CD14-positive monocyte (primary cell): ENCODE measurements at regions of chr1 and their contacts with region 1.

Region 1: GRCh38 chr1:200488375-200489165 is 78.7 kb upstream of the ZNF281 start:
- DNase-seq: peak; percentile 27 to 52 (median 52)
- H3K4me3 ChIP-seq: no peak overlapping the region
- H3K4me3 Mint-ChIP-seq: no peak overlapping the region
- H3K27ac ChIP-seq: no peak overlapping the region
- H3K27ac Mint-ChIP-seq: no peak overlapping the region
- H3K4me1 ChIP-seq: no peaks in the 10 kb centered on the region
- H3K4me1 Mint-ChIP-seq: peaks cover 7% of the 10 kb centered on the region
- H3K27me3 ChIP-seq: no peaks in the 10 kb centered on the region
- H3K27me3 Mint-ChIP-seq: peaks cover 0 to 7% (median 4%) of the 10 kb centered on the region in 3 donors
- CTCF ChIP-seq: peak; percentile 77

Region 2: DNA sequence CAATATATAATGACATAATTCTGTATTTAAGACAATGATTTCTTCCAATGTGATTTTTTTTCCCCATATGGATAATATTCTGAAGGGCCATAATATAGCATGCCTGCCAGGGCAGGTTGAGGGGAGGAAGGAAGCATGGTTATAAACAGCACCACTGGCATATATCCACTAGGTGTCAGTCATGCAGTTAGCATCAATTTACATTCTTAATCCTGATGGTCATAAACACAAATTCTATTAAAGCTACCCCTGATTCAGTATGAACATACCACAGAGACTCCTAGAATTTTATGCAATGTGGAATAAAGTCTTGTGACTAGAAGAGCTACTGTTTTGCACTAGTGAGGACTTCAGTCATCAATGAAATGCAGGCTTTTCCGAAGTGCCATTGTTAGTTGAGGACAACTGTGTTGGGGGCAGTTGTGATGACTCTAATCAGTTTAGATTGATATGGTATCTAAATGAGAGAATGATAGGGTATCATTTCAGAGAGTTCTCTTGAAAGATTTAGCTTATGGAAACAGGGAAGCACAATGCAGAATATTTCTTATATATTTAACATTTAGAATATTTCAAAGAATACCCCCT is 803.8 kb before region 1 on chr1:
- intact Hi-C with region 1: loop called (anchors 5 to 10 kb)
- DNase-seq: peak; percentile 42 to 72 (median 56)
- H3K4me3 ChIP-seq: no peak overlapping the region
- H3K4me3 Mint-ChIP-seq: no peak overlapping the region
- H3K27ac ChIP-seq: no peak overlapping the region
- H3K27ac Mint-ChIP-seq: no peak overlapping the region
- H3K4me1 ChIP-seq: peaks cover 0 to 6% of the 10 kb centered on the region in 2 donors
- H3K4me1 Mint-ChIP-seq: peaks cover 14% of the 10 kb centered on the region
- H3K27me3 ChIP-seq: no peaks in the 10 kb centered on the region
- H3K27me3 Mint-ChIP-seq: peaks cover 0 to 1% (median 0%) of the 10 kb centered on the region in 3 donors
- CTCF ChIP-seq: peak; percentile 92

Region 3: GRCh38 chr1:200029035-200029821 is 459.3 kb before region 1 on chr1:
- intact Hi-C with region 1: no loop called
- DNase-seq: no peak
- H3K4me3 ChIP-seq: peak overlapping the region; percentile 36 to 81 (median 45)
- H3K4me3 Mint-ChIP-seq: peak overlapping the region; percentile 80 to 96
- H3K27ac ChIP-seq: no peak overlapping the region
- H3K27ac Mint-ChIP-seq: no peak overlapping the region
- H3K4me1 ChIP-seq: peaks cover 12 to 15% of the 10 kb centered on the region in 2 donors
- H3K4me1 Mint-ChIP-seq: peaks cover 14% of the 10 kb centered on the region
- H3K27me3 ChIP-seq: peaks cover 68 to 89% of the 10 kb centered on the region in 2 donors
- H3K27me3 Mint-ChIP-seq: peaks cover 29 to 64% (median 32%) of the 10 kb centered on the region in 3 donors
- CTCF ChIP-seq: no peak

Region 4: GRCh38 chr1:200139661-200140250 is 348.8 kb before region 1 on chr1:
- intact Hi-C with region 1: loop called (anchors 2 to 10 kb)
- DNase-seq: peak; percentile 21 to 49 (median 48)
- H3K4me3 ChIP-seq: no peak overlapping the region
- H3K4me3 Mint-ChIP-seq: no peak overlapping the region
- H3K27ac ChIP-seq: no peak overlapping the region
- H3K27ac Mint-ChIP-seq: no peak overlapping the region
- H3K4me1 ChIP-seq: no peaks in the 10 kb centered on the region
- H3K4me1 Mint-ChIP-seq: peaks cover 15% of the 10 kb centered on the region
- H3K27me3 ChIP-seq: no peaks in the 10 kb centered on the region
- H3K27me3 Mint-ChIP-seq: peaks cover 0 to under 1% (median 0%) of the 10 kb centered on the region in 3 donors
- CTCF ChIP-seq: peak; percentile 86

Region 5: GRCh38 chr1:200279810-200280411 is 208.7 kb before region 1 on chr1:
- intact Hi-C with region 1: loop called (anchors 10 kb)
- DNase-seq: peak; percentile 12 to 39 (median 28)
- H3K4me3 ChIP-seq: no peak overlapping the region
- H3K4me3 Mint-ChIP-seq: no peak overlapping the region
- H3K27ac ChIP-seq: no peak overlapping the region
- H3K27ac Mint-ChIP-seq: no peak overlapping the region
- H3K4me1 ChIP-seq: no peaks in the 10 kb centered on the region
- H3K4me1 Mint-ChIP-seq: peaks cover 10% of the 10 kb centered on the region
- H3K27me3 ChIP-seq: no peaks in the 10 kb centered on the region
- H3K27me3 Mint-ChIP-seq: no peaks in the 10 kb centered on the region
- CTCF ChIP-seq: peak; percentile 88